BJ (cell line): ENCODE measurements at regions of chr22 and their contacts with region 1.

Region 1: DNA sequence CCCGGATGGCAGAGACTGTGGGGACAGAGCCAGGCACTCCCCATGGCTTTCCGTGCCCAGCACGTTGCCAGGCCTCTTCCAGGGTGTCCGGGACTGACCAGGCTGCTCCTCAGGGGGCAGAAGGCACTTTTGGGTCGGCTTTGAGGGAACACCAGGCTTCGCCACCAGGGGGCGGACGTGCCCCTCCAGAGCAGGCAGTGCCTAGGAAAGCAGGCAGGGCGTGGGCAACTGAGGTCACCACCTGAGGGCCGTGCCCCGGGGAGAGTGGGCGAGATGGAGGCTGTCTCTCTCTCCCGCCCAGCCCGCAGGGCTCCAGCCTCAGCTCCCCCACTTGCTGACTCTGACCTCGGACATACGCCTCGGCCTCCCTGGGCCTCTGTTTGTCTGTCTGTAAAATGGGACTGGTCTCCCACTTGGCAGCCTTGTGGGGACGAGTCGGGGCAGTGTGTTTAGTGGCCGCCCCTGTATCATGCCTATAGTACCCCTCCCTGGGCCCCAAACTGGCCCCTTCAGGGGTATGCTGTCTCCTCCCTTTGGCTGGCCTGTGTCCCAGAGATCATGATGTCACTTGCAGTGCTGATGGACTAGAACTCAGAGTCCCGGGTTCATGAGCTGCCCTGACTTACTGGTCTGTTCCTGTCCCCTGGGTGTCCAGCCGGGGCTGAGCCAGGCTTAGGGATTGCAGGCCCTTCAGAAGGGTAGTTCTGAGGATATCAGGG is 4.4 kb upstream of the PRR5 start:
- DNase-seq: no peak
- H3K4me3 ChIP-seq: no peak overlapping the region
- H3K27me3 ChIP-seq: no peaks in the 10 kb centered on the region
- CTCF ChIP-seq: peak; percentile 95

Region 2: GRCh38 chr22:44735540-44736488 is 38.2 kb after region 1 on chr22:
- CTCF ChIA-PET with region 1: interaction called, 142 read pairs
- POLR2A ChIA-PET with region 1: no interaction called
- DNase-seq: no peak
- H3K4me3 ChIP-seq: no peak overlapping the region
- H3K27me3 ChIP-seq: no peaks in the 10 kb centered on the region
- CTCF ChIP-seq: peak; percentile 97

Region 3: GRCh38 chr22:44796972-44797725 is 99.6 kb after region 1 on chr22:
- CTCF ChIA-PET with region 1: no interaction called
- POLR2A ChIA-PET with region 1: no interaction called
- DNase-seq: no peak
- H3K4me3 ChIP-seq: no peak overlapping the region
- H3K27me3 ChIP-seq: peaks cover 8% of the 10 kb centered on the region
- CTCF ChIP-seq: no peak

Region 4: GRCh38 chr22:44847917-44848741 is 150.5 kb after region 1 on chr22:
- CTCF ChIA-PET with region 1: no interaction called
- POLR2A ChIA-PET with region 1: no interaction called
- DNase-seq: no peak
- H3K4me3 ChIP-seq: no peak overlapping the region
- H3K27me3 ChIP-seq: no peaks in the 10 kb centered on the region
- CTCF ChIP-seq: no peak